B cell (primary cell): ENCODE measurements at regions of chr2 and their contacts with region 1.

Region 1: DNA sequence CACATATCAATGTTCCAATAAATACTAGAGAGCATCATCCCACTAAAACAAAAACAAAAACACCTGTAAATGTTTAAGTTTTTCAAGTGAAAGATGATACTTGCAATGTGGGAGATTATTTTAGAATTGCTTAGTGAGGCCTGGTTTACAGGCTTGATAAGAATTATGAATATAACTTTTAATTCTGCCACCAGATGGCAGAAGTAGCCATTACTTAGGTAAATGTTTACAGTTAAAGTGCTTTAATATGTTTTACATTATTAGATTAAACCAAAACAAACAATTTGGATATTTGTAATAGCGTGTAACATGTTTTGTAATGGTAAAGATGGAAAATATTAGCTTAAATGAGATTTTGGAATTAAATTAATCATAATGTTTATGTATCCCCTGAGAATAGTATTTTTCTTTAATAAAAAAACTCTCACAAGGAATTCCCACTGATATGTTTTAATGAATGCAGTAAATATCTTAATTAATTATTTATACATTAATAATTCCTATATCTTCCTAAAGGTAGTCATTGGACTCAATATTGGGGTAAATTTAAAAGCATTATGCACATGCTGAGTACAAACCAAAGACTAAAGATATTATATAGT is 522.0 kb downstream of the SPAG16 start:
- DNase-seq: peak; percentile 3
- ATAC-seq: no peak
- H3K4me3 ChIP-seq: no peak overlapping the region
- H3K4me3 Mint-ChIP-seq: no peak overlapping the region
- H3K27ac ChIP-seq: no peak overlapping the region
- H3K27ac Mint-ChIP-seq: no peak overlapping the region
- H3K4me1 ChIP-seq: no peaks in the 10 kb centered on the region
- H3K4me1 Mint-ChIP-seq: no peaks in the 10 kb centered on the region
- H3K27me3 ChIP-seq: no peaks in the 10 kb centered on the region
- H3K27me3 Mint-ChIP-seq: no peaks in the 10 kb centered on the region
- CTCF ChIP-seq: peak; percentile 40

Region 2: DNA sequence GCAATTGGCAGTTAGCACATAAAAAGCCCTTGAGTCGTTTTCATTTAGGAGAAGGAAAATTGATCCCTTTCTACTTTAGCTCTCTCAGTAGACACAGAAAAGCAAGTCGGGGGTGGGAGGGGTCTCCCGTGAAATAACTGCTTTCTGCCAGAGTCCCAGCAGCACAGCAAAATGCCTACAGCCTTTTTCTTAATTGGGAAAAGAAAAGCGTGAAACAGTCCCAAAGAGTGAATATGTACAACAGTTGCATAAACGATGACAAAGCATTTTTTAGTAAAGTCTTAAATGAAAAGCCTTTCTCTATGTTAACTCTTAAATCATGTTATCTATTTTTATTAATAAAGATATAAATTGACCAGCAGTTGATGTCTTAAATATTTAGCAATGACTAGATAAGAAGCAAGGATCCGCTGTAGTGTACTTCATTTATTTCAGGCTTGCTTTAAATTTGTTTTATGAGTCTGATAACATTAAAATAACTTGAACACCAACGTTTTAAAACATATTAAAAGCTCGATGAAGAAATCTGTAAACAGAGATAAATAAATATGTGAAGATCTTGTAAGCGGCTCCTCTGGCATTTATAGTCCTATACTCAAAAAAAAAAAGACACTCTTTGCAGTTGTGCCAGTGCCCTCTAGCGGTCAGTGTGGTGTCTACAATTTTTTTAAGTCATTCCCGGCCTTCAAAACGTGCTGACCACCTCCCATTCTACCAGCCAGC is 1463.3 kb after region 1 on chr2:
- CTCF ChIA-PET with region 1: no interaction called
- POLR2A ChIA-PET with region 1: no interaction called
- intact Hi-C with region 1: loop called (anchors 5 kb)
- DNase-seq: peak; percentile 74
- ATAC-seq: peak; percentile 61
- H3K4me3 ChIP-seq: no peak overlapping the region
- H3K4me3 Mint-ChIP-seq: no peak overlapping the region
- H3K27ac ChIP-seq: no peak overlapping the region
- H3K27ac Mint-ChIP-seq: no peak overlapping the region
- H3K4me1 ChIP-seq: no peaks in the 10 kb centered on the region
- H3K4me1 Mint-ChIP-seq: no peaks in the 10 kb centered on the region
- H3K27me3 ChIP-seq: no peaks in the 10 kb centered on the region
- H3K27me3 Mint-ChIP-seq: no peaks in the 10 kb centered on the region
- CTCF ChIP-seq: peak; percentile 94